ENCODE measurements at regions of chr4 and their contacts with region 1.

Region 1: GRCh38 chr4:173013232-173013930 is 155.2 kb upstream of the GALNT7 start:
- DNase-seq: peak in 1 of 2 donors; percentile 38
- ATAC-seq: peak in 7 of 8 donors; percentile 31 to 80 (median 67)
- H3K4me3 ChIP-seq: no peak overlapping the region
- H3K27ac ChIP-seq: peak overlapping the region in 1 of 10 donors; percentile 22
- H3K4me1 ChIP-seq: peaks cover 0 to 12% (median 0%) of the 10 kb centered on the region in 9 donors
- H3K27me3 ChIP-seq: no peaks in the 10 kb centered on the region
- CTCF ChIP-seq: peak; percentile 48 to 77 (median 70)

Region 2: GRCh38 chr4:173230062-173230461 is 216.7 kb after region 1 on chr4:
- intact Hi-C with region 1: no loop called
- DNase-seq: no peak
- ATAC-seq: no peak
- H3K4me3 ChIP-seq: no peak overlapping the region
- H3K27ac ChIP-seq: no peak overlapping the region
- H3K4me1 ChIP-seq: peaks cover 0 to 22% (median 3%) of the 10 kb centered on the region in 9 donors
- H3K27me3 ChIP-seq: no peaks in the 10 kb centered on the region
- CTCF ChIP-seq: no peak

Region 3: GRCh38 chr4:173257732-173258717 is 244.6 kb after region 1 on chr4:
- intact Hi-C with region 1: loop called in 9 of 10 experiments (anchors 1 to 5 kb)
- DNase-seq: peak; percentile 33 to 61
- ATAC-seq: peak; percentile 78 to 97 (median 92)
- H3K4me3 ChIP-seq: no peak overlapping the region
- H3K27ac ChIP-seq: no peak overlapping the region
- H3K4me1 ChIP-seq: peaks cover 0 to 3% (median 0%) of the 10 kb centered on the region in 9 donors
- H3K27me3 ChIP-seq: no peaks in the 10 kb centered on the region
- CTCF ChIP-seq: peak; percentile 47 to 92 (median 77)

Region 4: DNA sequence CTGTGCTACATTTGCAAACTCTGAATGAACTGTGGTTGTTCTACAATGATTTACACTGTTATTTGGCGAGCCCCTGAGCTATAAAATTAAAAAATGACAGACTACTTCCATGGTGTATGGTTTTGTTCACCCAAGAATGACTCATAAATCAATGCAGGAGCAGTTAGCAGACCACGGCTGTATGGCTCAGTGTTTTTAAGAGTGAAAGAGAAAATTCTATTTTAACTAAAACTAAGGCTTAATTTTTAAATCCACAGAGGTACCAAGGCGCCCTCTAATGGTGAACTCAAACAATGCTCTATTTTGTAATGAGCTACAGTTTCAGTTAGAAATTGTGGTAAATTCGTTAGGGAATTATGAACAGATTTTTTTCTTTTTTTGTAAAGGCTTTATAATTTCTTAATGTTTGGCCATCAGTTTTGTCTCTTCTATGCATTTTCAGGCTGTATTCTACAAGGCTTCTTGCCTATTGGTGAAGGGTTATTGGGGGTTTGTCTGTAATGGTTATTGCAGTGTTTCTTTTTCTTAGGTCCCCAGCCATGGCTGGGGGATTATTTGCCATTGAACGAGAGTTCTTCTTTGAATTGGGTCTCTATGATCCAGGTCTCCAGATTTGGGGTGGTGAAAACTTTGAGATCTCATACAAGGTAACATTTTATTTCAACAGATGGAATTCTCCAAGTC is 288.3 kb after region 1 on chr4:
- intact Hi-C with region 1: loop called in 3 of 10 experiments (anchors 2 to 5 kb)
- DNase-seq: no peak
- ATAC-seq: no peak
- H3K4me3 ChIP-seq: no peak overlapping the region
- H3K27ac ChIP-seq: no peak overlapping the region
- H3K4me1 ChIP-seq: no peaks in the 10 kb centered on the region
- H3K27me3 ChIP-seq: no peaks in the 10 kb centered on the region
- CTCF ChIP-seq: peak; percentile 46 to 81 (median 76)

Region 5: GRCh38 chr4:173405840-173406606 is 392.6 kb after region 1 on chr4:
- intact Hi-C with region 1: loop called in 5 of 10 experiments (anchors 10 kb)
- DNase-seq: no peak
- ATAC-seq: no peak
- H3K4me3 ChIP-seq: no peak overlapping the region
- H3K27ac ChIP-seq: no peak overlapping the region
- H3K4me1 ChIP-seq: peaks cover 0 to 10% (median 0%) of the 10 kb centered on the region in 9 donors
- H3K27me3 ChIP-seq: no peaks in the 10 kb centered on the region
- CTCF ChIP-seq: no peak

Measured in heart right ventricle (tissue), 16 donors.